IMR-90 (cell line): ENCODE measurements at regions of chr4 and their contacts with region 1.

Region 1: DNA sequence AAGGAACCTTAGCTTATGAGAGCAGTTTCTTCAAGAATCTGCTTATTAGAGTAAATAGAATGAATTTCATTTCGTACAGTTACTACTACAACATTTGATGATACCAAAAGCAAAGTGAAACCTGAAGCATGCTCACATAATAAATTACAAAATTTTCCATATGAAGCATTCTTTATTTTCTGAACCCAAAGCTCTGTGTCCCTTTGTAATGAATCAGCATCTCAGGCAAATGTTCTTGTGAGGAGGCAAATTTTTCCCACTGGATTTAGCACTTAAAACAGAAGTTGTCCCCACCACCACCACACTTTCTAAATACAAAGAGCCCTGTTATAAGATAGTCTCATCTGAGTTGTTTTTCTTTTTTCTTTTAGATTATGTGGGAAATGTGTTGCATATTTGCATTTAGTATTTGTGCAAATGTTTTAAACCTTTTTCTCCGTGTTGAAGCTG is 70.7 kb upstream of the NFKB1 start:
- DNase-seq: peak; percentile 16
- ATAC-seq: peak; percentile 9
- H3K4me3 ChIP-seq: peak overlapping the region; percentile 61
- H3K27ac ChIP-seq: no peak overlapping the region
- H3K4me1 ChIP-seq: peaks cover 4% of the 10 kb centered on the region; the same call in 1 of the 2 replicates
- H3K27me3 ChIP-seq: no peaks in the 10 kb centered on the region
- CTCF ChIP-seq: no peak
- POLR2A ChIP-seq: no peak
- RAD21 ChIP-seq: no peak

Region 2: DNA sequence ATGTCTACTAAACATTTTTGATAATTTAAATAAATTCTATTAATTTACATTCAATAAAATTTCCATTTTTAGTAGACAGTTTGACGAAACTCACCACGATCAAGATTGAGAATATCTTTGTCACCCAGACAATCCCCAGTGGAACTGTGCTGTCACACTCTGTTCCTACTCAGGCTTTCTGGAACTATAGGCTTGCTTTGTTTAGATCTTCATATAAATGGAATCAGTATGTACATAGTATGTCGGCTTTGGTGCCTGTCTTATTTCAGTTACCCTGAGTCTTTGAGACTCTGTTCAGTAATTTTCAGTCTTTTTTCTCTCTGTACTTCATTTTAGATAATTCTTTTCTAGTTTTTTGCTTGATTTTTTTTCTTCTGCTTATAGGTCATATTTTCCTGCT is 1749.2 kb before region 1 on chr4:
- CTCF ChIA-PET with region 1: no interaction called
- POLR2A ChIA-PET with region 1: interaction called, 10 read pairs
- dilution Hi-C with region 1: no loop called
- in situ Hi-C with region 1: no loop called
- intact Hi-C with region 1: no loop called
- DNase-seq: no peak
- ATAC-seq: no peak
- H3K4me3 ChIP-seq: no peak overlapping the region
- H3K27ac ChIP-seq: no peak overlapping the region
- H3K4me1 ChIP-seq: no peaks in the 10 kb centered on the region
- H3K27me3 ChIP-seq: no peaks in the 10 kb centered on the region
- CTCF ChIP-seq: no peak
- POLR2A ChIP-seq: no peak
- RAD21 ChIP-seq: no peak

Region 3: GRCh38 chr4:101156619-101157310 is 1273.7 kb before region 1 on chr4:
- CTCF ChIA-PET with region 1: no interaction called
- POLR2A ChIA-PET with region 1: interaction called, 10 read pairs
- dilution Hi-C with region 1: no loop called
- in situ Hi-C with region 1: no loop called
- intact Hi-C with region 1: no loop called
- DNase-seq: peak; percentile 28
- ATAC-seq: no peak
- H3K4me3 ChIP-seq: no peak overlapping the region
- H3K27ac ChIP-seq: no peak overlapping the region
- H3K4me1 ChIP-seq: peaks cover 12% of the 10 kb centered on the region
- H3K27me3 ChIP-seq: no peaks in the 10 kb centered on the region
- CTCF ChIP-seq: no peak
- POLR2A ChIP-seq: no peak
- RAD21 ChIP-seq: no peak

Region 4: GRCh38 chr4:101981709-101982130 is 448.8 kb before region 1 on chr4:
- CTCF ChIA-PET with region 1: no interaction called
- POLR2A ChIA-PET with region 1: no interaction called
- dilution Hi-C with region 1: no loop called
- in situ Hi-C with region 1: no loop called
- intact Hi-C with region 1: no loop called
- DNase-seq: no peak
- ATAC-seq: no peak
- H3K4me3 ChIP-seq: no peak overlapping the region
- H3K27ac ChIP-seq: no peak overlapping the region
- H3K4me1 ChIP-seq: no peaks in the 10 kb centered on the region
- H3K27me3 ChIP-seq: no peaks in the 10 kb centered on the region
- CTCF ChIP-seq: no peak
- POLR2A ChIP-seq: no peak
- RAD21 ChIP-seq: no peak

Region 5: DNA sequence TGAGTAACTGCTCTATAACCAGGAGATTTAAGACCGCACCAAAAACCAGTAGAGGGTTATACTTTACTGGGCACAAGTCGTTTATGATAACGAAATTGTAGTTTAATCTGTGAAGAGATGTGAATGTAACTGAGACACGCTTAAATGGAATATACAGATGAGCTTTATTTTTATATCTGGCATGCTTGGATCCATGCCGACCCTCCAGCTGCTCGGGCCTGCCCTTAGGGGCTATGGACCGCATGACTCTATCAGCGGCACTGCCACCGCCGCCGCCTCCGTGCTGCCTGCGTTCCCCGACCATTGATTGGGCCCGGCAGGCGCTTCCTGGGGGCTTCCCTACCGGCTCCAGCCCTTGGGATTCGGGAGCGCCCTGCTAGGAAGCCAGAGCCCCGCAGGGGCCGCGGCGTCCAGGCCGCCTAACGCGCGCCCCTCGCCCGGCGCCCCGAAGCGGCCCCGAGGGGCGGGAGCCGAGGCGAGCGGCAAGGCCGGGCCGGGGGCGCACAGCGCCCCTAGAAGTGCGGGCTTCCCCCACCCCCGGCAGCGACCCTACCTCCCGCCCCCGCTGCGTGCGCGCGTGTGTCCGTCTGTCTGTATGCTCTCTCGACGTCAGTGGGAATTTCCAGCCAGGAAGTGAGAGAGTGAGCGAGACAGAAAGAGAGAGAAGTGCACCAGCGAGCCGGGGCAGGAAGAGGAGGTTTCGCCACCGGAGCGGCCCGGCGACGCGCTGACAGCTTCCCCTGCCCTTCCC is 70.4 kb after region 1 on chr4 and contains the start of gene NFKB1:
- CTCF ChIA-PET with region 1: interaction called, 5 read pairs
- POLR2A ChIA-PET with region 1: no interaction called
- dilution Hi-C with region 1: no loop called
- in situ Hi-C with region 1: no loop called
- intact Hi-C with region 1: loop called (anchors 2 kb)
- DNase-seq: peak; percentile 89
- ATAC-seq: peak; percentile 67
- H3K4me3 ChIP-seq: peak within 1 kb of the TSS; percentile 70
- H3K27ac ChIP-seq: peak within 1 kb of the TSS; percentile 86
- H3K4me1 ChIP-seq: peaks cover 3% of the 10 kb centered on the region; the same call in 1 of the 2 replicates
- H3K27me3 ChIP-seq: no peaks in the 10 kb centered on the region
- CTCF ChIP-seq: no peak
- POLR2A ChIP-seq: peak; percentile 72; the same call in 1 of the 2 replicates
- RAD21 ChIP-seq: no peak
- total RNA-seq, gene NFKB1: 23.6 and 24.6 TPM in 2 replicates

Region 6: DNA sequence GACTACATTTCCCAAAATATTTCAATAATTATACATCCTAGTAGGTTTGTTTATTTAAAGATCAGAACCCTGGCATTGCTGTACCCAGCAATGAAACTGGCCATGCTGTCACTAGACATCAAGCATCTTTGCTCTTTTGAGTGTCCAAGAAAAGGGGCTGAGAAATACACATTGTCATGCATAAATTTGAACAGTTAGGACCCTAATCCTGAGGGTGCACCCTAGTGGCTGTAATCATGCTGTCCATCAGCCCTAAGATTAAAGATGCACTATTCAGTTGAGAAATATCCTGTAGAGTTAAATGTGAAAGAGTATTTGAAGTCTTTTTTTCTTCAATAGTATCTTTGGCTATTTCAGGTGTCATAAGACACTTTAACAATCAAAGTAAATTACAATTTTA is 179.5 kb after region 1 on chr4:
- CTCF ChIA-PET with region 1: no interaction called
- POLR2A ChIA-PET with region 1: interaction called, 17 read pairs
- dilution Hi-C with region 1: no loop called
- in situ Hi-C with region 1: no loop called
- intact Hi-C with region 1: no loop called
- DNase-seq: peak; percentile 12
- ATAC-seq: peak; percentile 40; the same call in 1 of the 2 replicates
- H3K4me3 ChIP-seq: no peak overlapping the region
- H3K27ac ChIP-seq: no peak overlapping the region
- H3K4me1 ChIP-seq: no peaks in the 10 kb centered on the region; the same call in 1 of the 2 replicates
- H3K27me3 ChIP-seq: no peaks in the 10 kb centered on the region
- CTCF ChIP-seq: peak; percentile 41
- POLR2A ChIP-seq: no peak
- RAD21 ChIP-seq: peak; percentile 26; the same call in 1 of the 2 replicates

Region 7: GRCh38 chr4:103099691-103100392 is 669.4 kb after region 1 on chr4 and contains the start of gene BDH2:
- CTCF ChIA-PET with region 1: interaction called, 3 read pairs
- POLR2A ChIA-PET with region 1: no interaction called
- dilution Hi-C with region 1: no loop called
- in situ Hi-C with region 1: no loop called
- intact Hi-C with region 1: loop called (anchors 2 kb)
- DNase-seq: peak; percentile 97
- ATAC-seq: peak; percentile 90
- H3K4me3 ChIP-seq: peak within 1 kb of the TSS; percentile 50
- H3K27ac ChIP-seq: peak within 1 kb of the TSS; percentile 96
- H3K4me1 ChIP-seq: peaks cover 7% of the 10 kb centered on the region
- H3K27me3 ChIP-seq: no peaks in the 10 kb centered on the region
- CTCF ChIP-seq: peak; percentile 85
- POLR2A ChIP-seq: no peak
- RAD21 ChIP-seq: peak; percentile 79
- total RNA-seq, gene BDH2: 36.4 and 52.2 TPM in 2 replicates